ENCODE measurements at regions of chr7 and their contacts with region 1.

Region 1: GRCh38 chr7:131521651-131522163 is 34.7 kb downstream of the PODXL start:
- DNase-seq: peak; percentile 73
- ATAC-seq: peak; percentile 82
- H3K4me3 ChIP-seq: peak overlapping the region; percentile 28; the same call in 1 of the 2 replicates
- H3K27ac ChIP-seq: peak overlapping the region; percentile 73
- H3K4me1 ChIP-seq: peaks cover 40% of the 10 kb centered on the region
- H3K27me3 ChIP-seq: no peaks in the 10 kb centered on the region
- CTCF ChIP-seq: no peak

Region 2: GRCh38 chr7:131390275-131390674 is 131.4 kb before region 1 on chr7:
- CTCF ChIA-PET with region 1: no interaction called
- POLR2A ChIA-PET with region 1: no interaction called
- intact Hi-C with region 1: no loop called
- DNase-seq: no peak
- ATAC-seq: no peak
- H3K4me3 ChIP-seq: no peak overlapping the region
- H3K27ac ChIP-seq: no peak overlapping the region
- H3K4me1 ChIP-seq: peaks cover 11% of the 10 kb centered on the region
- H3K27me3 ChIP-seq: no peaks in the 10 kb centered on the region
- CTCF ChIP-seq: no peak

Region 3: DNA sequence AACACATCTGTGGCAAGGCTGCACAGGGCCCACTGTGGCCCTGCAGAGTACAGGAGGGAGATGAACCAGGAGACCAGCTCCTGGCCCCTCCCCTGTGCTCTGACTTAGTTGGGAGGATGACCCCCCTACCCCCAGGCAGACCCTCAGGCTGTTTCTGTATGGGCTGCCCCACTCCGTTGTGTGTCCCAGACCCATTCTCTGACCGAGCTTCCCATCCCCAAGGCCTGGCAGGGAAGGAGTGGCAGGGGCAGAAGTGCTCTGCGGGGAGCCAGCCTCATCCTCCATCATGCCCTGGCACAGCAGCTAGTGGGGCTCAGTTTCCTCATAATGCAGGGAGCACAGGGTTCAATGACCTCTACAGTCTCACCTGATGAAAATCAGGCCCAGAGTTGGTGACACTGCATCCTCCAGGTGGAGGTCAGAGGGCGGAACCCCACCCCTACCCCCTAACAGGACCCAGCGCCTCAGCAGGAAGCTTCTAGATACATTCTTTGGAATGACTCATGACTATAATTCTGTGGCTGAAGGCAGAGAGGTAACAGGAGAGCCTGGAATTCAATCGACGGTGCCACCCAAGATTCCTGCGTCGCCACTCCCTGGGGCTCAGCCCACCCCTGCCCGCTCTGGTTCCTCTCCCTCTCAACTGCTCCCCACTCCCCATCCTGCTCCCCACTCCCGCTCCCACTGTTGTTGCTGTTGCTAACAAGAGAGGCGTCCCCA is 16.5 kb after region 1 on chr7:
- CTCF ChIA-PET with region 1: interaction called, 6 read pairs
- POLR2A ChIA-PET with region 1: interaction called, 5 read pairs
- intact Hi-C with region 1: loop called (anchors 2 kb)
- DNase-seq: peak; percentile 88
- ATAC-seq: peak; percentile 91
- H3K4me3 ChIP-seq: no peak overlapping the region
- H3K27ac ChIP-seq: peak overlapping the region; percentile 87
- H3K4me1 ChIP-seq: peaks cover 35% of the 10 kb centered on the region
- H3K27me3 ChIP-seq: no peaks in the 10 kb centered on the region
- CTCF ChIP-seq: no peak

Region 4: DNA sequence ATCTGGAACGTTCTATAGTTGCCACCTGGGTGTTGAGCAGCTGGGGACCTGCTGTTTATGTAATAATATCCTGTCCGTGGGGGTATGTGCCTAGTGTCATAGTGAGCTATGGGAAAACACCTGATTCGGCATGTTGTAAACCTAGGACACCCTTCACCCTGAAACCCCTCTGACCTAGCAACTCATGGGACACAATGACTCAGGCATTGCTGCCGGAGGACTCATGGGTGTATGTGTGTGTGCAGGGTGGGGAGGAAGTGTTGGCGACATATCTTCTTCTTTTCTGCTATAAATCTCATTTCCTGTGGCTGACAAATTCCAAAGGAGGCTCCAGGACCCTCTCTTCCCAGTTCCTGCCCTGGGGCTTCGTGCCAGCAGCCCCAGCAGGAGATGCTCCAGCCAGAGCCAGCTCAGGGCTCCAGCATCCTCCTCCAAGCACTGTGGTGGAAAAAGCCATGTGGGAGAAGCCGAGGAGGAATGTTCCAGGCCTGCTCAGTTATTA is 111.7 kb after region 1 on chr7:
- CTCF ChIA-PET with region 1: no interaction called
- POLR2A ChIA-PET with region 1: interaction called, 16 read pairs
- intact Hi-C with region 1: no loop called
- DNase-seq: peak; percentile 86
- ATAC-seq: peak; percentile 85
- H3K4me3 ChIP-seq: no peak overlapping the region
- H3K27ac ChIP-seq: peak overlapping the region; percentile 85
- H3K4me1 ChIP-seq: peaks cover 39% of the 10 kb centered on the region
- H3K27me3 ChIP-seq: no peaks in the 10 kb centered on the region
- CTCF ChIP-seq: no peak

Region 5: DNA sequence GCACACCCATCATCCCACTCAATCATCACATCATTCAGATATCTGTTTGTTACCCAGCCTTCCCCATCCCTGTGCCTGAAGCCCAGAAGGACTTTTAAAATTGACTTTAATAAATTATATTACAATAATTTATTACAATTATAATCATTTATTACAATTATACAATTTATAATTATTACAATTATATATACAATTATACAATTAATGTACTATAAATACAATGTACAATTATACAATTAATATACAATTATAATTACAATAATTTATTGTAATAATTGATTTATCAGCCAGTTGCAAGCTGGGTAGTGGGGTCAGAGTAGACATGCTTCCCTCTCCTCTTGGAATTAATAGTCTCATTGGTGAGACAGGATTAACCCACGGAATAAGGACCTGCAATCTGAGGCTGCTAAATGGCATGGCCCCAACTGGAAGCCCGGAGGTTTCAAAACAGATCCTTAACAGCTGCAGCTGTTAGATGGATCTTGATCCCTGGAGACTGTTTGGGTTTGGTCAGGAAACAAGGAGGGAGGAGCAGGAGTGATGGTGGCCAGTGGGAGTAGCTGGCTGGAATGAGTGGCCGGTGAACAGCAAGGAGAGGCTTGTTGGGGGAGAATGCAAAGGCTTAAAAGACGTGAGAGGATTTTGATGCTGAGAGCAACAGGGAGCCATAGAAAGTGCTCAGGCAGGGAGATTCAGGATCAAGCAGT is 437.6 kb after region 1 on chr7:
- CTCF ChIA-PET with region 1: no interaction called
- POLR2A ChIA-PET with region 1: no interaction called
- intact Hi-C with region 1: no loop called
- DNase-seq: no peak
- ATAC-seq: no peak
- H3K4me3 ChIP-seq: no peak overlapping the region
- H3K27ac ChIP-seq: no peak overlapping the region
- H3K4me1 ChIP-seq: peaks cover 4% of the 10 kb centered on the region; the same call in 1 of the 2 replicates
- H3K27me3 ChIP-seq: 0 out of 2 replicates have a peak, but pooled peaks cover 4% of the 10 kb centered on the region
- CTCF ChIP-seq: no peak

Measured in PC-3 (cell line).